ENCODE measurements at regions of chr1 and their contacts with region 1.

Region 1: DNA sequence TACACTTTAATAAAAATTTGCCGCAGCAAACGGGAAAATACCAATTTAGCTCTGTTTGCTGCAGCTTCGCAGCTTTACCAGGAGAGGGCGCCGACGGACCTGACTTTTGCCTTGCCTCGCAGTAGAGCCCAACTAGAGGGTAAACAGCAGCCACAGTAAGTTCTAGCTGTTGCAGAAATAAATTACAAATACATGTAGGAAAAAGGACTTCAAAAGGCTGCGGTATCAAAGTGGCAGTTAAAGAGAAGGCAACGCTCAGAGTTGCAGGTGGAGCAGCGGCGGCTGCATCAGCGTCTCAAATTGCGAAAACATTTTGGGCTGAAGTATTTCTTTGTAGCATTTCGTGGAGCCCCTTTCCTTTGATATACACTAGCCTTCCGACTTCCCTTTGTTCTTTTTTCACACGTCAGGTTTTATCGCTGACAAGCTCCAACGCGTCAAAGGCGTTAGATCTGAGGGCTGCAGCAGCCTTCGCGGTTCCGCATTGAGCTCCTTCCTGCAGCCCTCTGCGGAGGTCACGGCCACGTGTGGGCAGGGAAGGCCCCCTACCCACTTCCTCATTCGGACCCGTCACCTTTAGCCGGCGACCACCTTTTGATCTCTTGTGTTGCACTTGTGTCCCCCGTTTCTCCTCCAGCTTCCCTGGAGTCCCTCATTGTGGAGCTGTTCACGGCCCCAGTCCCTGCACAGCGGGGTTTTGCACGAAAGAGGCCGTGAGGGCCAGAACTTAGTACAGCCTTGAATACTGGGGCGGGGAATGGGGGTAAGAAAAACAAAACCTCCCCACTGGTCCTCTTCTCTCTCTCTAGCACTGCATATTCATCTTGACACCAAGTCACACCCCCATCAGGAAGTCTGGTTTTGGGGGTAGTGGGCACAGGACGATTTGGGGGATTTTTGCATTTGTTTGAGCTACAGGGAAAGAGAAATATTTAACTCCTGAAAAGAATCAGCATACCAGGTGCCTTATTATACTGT is 72.8 kb downstream of the S1PR1 start:
- DNase-seq: peak in 9 of 10 donors; percentile 32 to 56 (median 49)
- H3K4me3 ChIP-seq: peak overlapping the region; percentile 7 to 76 (median 55)
- H3K27ac ChIP-seq: peak overlapping the region in 2 of 59 donors; percentile 21 to 36
- H3K27me3 ChIP-seq: no peaks in the 10 kb centered on the region
- CTCF ChIP-seq: peak; percentile 78 to 93 (median 87)

Region 2: GRCh38 chr1:101088431-101088830 is 221.2 kb before region 1 on chr1:
- intact Hi-C with region 1: no loop called
- DNase-seq: no peak
- H3K4me3 ChIP-seq: no peak overlapping the region
- H3K27ac ChIP-seq: no peak overlapping the region
- H3K27me3 ChIP-seq: no peaks in the 10 kb centered on the region
- CTCF ChIP-seq: no peak

Region 3: GRCh38 chr1:101275672-101276071 is 34.0 kb before region 1 on chr1:
- intact Hi-C with region 1: no loop called
- DNase-seq: no peak
- H3K4me3 ChIP-seq: no peak overlapping the region
- H3K27ac ChIP-seq: no peak overlapping the region
- H3K27me3 ChIP-seq: peaks cover 0 to 7% (median 0%) of the 10 kb centered on the region in 45 donors
- CTCF ChIP-seq: no peak

Region 4: DNA sequence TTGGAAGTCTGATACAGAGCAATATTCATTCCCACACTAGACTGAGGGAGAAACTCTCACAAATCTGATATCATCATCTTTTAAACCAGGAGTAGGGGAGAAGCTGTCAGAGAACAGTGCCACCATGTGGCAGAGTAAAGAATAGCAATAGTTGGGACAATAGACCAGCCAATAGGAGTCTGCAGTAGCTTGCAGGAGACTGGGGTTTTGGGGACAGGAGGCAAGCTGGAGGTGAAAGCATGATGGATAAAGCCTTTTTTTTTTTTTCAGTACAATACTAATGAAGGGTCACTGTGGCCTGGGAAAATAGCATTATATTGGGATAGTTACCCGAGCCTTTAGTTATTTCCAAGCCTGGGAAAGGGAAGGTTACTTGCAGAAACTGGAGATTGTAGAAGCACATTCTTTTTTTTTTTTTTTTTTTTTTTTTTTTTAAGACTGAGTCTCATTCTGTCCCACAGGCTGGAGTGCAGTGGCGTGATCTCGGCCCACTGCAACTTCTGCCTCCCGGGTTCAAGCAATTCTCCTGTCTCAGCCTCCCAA is 47.9 kb after region 1 on chr1:
- intact Hi-C with region 1: loop called (anchors 2 to 5 kb)
- DNase-seq: peak in 3 of 10 donors; percentile 38 to 63 (median 58)
- H3K4me3 ChIP-seq: no peak overlapping the region
- H3K27ac ChIP-seq: no peak overlapping the region
- H3K27me3 ChIP-seq: peaks cover 0 to 6% (median 0%) of the 10 kb centered on the region in 45 donors
- CTCF ChIP-seq: peak; percentile 73 to 95 (median 86)